ENCODE measurements at regions of chr13 and their contacts with region 1.

Region 1: GRCh38 chr13:38582133-38582532 is 104.7 kb upstream of the FREM2 start:
- DNase-seq: peak; percentile 47
- ATAC-seq: peak; percentile 92
- H3K4me3 ChIP-seq: no peak overlapping the region
- H3K27ac ChIP-seq: no peak overlapping the region
- H3K4me1 ChIP-seq: no peaks in the 10 kb centered on the region
- H3K27me3 ChIP-seq: no peaks in the 10 kb centered on the region
- CTCF ChIP-seq: peak; percentile 58
- EP300 ChIP-seq: no peak
- POLR2A ChIP-seq: no peak
- RAD21 ChIP-seq: no peak

Region 2: GRCh38 chr13:37074703-37075102 is 1507.4 kb before region 1 on chr13:
- CTCF ChIA-PET with region 1: no interaction called
- POLR2A ChIA-PET with region 1: no interaction called
- in situ Hi-C with region 1: no loop called
- intact Hi-C with region 1: loop called (anchors 5 kb)
- DNase-seq: no peak
- ATAC-seq: no peak
- H3K4me3 ChIP-seq: no peak overlapping the region
- H3K27ac ChIP-seq: no peak overlapping the region
- H3K4me1 ChIP-seq: peaks cover 11% of the 10 kb centered on the region
- H3K27me3 ChIP-seq: peaks cover 0 to 11% of the 10 kb centered on the region in 2 experiments; a peak in 1 of 5 replicates
- CTCF ChIP-seq: 0 out of 2 replicates have a peak, but pooled peaks have one; percentile 14
- EP300 ChIP-seq: no peak
- POLR2A ChIP-seq: no peak
- RAD21 ChIP-seq: no peak

Region 3: GRCh38 chr13:37769078-37769477 is 813.1 kb before region 1 on chr13:
- CTCF ChIA-PET with region 1: interaction called, 7 read pairs
- POLR2A ChIA-PET with region 1: no interaction called
- in situ Hi-C with region 1: loop called (anchors 25 kb)
- intact Hi-C with region 1: no loop called
- DNase-seq: peak; percentile 2
- ATAC-seq: no peak
- H3K4me3 ChIP-seq: no peak overlapping the region
- H3K27ac ChIP-seq: no peak overlapping the region
- H3K4me1 ChIP-seq: no peaks in the 10 kb centered on the region
- H3K27me3 ChIP-seq: no peaks in the 10 kb centered on the region
- CTCF ChIP-seq: no peak
- EP300 ChIP-seq: no peak
- POLR2A ChIP-seq: no peak
- RAD21 ChIP-seq: no peak

Region 4: GRCh38 chr13:37869756-37870488 is 712.2 kb before region 1 on chr13 and contains the start of gene TRPC4:
- CTCF ChIA-PET with region 1: no interaction called
- POLR2A ChIA-PET with region 1: no interaction called
- in situ Hi-C with region 1: no loop called
- intact Hi-C with region 1: loop called (anchors 5 kb)
- DNase-seq: peak; percentile 12
- ATAC-seq: peak; percentile 80
- H3K4me3 ChIP-seq: no peak within 1 kb of the TSS
- H3K27ac ChIP-seq: no peak within 1 kb of the TSS
- H3K4me1 ChIP-seq: no peaks in the 10 kb centered on the region
- H3K27me3 ChIP-seq: peaks cover 0 to 23% of the 10 kb centered on the region in 2 experiments; a peak in 2 of 5 replicates
- CTCF ChIP-seq: peak; percentile 41
- EP300 ChIP-seq: no peak
- POLR2A ChIP-seq: no peak
- RAD21 ChIP-seq: no peak
- total RNA-seq, gene TRPC4: not detected in 2 replicates

Region 5: GRCh38 chr13:38045307-38046048 is 536.7 kb before region 1 on chr13:
- CTCF ChIA-PET with region 1: no interaction called
- POLR2A ChIA-PET with region 1: no interaction called
- in situ Hi-C with region 1: no loop called
- intact Hi-C with region 1: loop called (anchors 5 kb)
- DNase-seq: peak; percentile 2
- ATAC-seq: peak; percentile 78
- H3K4me3 ChIP-seq: no peak overlapping the region
- H3K27ac ChIP-seq: no peak overlapping the region
- H3K4me1 ChIP-seq: no peaks in the 10 kb centered on the region
- H3K27me3 ChIP-seq: no peaks in the 10 kb centered on the region
- CTCF ChIP-seq: peak; percentile 24
- EP300 ChIP-seq: no peak
- POLR2A ChIP-seq: no peak
- RAD21 ChIP-seq: no peak

Measured in HepG2 (cell line).